Aorta (tissue), 5 donors: ENCODE measurements at regions of chr11 and their contacts with region 1.

Region 1: DNA sequence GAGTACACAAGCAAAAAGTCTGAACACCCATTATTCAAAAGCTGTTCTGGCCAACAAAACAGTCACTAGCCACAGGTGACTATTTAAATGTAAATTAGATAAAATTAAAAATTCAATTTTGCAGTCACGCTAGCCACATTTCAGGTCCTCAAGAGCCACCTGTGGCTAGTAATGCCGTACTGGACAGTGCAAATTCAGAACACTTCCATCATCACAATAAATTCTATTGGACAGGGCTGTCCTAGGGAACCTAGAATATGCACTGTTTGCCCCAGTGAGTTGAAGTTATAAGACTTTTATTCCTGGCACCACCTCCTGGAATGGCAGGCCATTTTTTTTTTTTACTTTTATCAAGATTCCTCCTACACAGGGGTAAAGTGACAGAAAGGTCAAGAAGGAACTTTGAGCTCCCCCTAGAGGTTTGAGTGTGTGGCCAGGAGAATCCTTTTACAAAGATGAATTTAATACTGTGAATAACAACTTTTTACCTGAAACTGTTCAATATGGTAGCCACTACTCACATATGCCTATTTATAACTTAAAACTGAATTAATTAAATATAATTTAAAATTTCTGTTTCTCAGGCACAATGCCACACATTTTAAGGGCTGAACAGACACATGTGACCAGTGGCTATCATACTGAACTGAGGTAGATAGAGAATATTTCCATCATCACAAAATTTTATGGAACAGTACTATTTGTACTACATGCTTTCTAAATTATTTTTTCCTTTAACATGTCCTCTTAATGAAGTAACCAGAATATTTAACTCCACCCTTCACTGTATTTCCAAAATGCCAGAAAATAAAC is 6.5 kb downstream of the MSANTD2 start:
- DNase-seq: no peak
- ATAC-seq: no peak
- H3K4me3 ChIP-seq: no peak overlapping the region
- H3K27ac ChIP-seq: no peak overlapping the region
- H3K4me1 ChIP-seq: peaks cover 2 to 12% of the 10 kb centered on the region in 2 donors
- H3K27me3 ChIP-seq: no peaks in the 10 kb centered on the region

Region 2: GRCh38 chr11:124778281-124778680 is 15.4 kb before region 1 on chr11:
- intact Hi-C with region 1: loop called in 1 of 2 experiments (anchors 2 kb)
- DNase-seq: no peak
- ATAC-seq: no peak
- H3K4me3 ChIP-seq: no peak overlapping the region
- H3K27ac ChIP-seq: peak overlapping the region; percentile 36 to 96
- H3K4me1 ChIP-seq: peaks cover 0 to 11% of the 10 kb centered on the region in 2 donors
- H3K27me3 ChIP-seq: no peaks in the 10 kb centered on the region

Region 3: DNA sequence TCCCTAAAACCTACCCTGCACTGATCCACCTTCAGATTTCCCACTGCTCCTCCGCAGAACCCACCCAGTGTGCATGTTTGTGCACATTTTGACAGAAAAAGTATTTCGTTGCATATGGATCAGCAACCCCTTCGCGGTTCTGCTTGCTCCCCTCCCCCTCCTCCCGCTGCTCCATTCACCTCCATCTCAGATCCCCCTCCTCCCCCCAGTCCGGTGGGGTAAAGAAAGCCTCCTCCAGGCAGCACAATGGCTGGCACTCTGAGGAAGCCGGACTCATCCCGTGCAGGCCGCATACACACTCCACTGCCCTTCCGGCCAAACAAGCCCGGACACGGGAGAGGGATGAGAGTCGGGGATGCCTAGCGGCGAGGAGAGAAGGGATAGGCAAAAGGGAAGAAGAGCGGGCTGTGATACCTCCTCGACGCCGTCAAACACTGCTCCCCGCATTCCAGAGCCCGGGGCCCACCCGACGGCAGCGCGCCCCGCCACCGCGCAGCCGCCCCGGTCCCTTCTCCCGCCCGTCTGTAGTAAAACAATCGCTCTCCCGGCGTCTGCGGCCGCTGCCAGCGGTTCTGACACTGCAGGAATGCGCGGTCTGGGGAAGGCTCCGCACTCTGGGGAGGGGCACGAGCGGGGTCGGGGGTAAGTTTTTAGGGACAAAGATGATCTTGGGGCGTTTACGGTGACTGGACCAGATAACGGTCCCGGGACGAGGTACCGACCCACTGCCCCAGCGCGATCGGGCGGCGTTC is 701.5 kb after region 1 on chr11:
- intact Hi-C with region 1: no loop called
- DNase-seq: peak; percentile 62 to 89
- ATAC-seq: peak; percentile 82
- H3K4me3 ChIP-seq: peak overlapping the region; percentile 64 to 97
- H3K27ac ChIP-seq: peak overlapping the region in 1 of 2 donors; percentile 83
- H3K4me1 ChIP-seq: no peaks in the 10 kb centered on the region
- H3K27me3 ChIP-seq: no peaks in the 10 kb centered on the region